Thyroid gland (tissue), 4 donors: ENCODE measurements at regions of chr3 and their contacts with region 1.

Region 1: GRCh38 chr3:194315088-194315964 is 35.8 kb downstream of the CPN2 start:
- DNase-seq: peak; percentile 86 to 87
- H3K4me3 ChIP-seq: peak overlapping the region in 1 of 3 donors; percentile 19
- H3K27ac ChIP-seq: peak overlapping the region; percentile 28 to 66 (median 44)
- H3K4me1 ChIP-seq: peaks cover 21 to 46% of the 10 kb centered on the region in 2 donors
- H3K27me3 ChIP-seq: no peaks in the 10 kb centered on the region
- CTCF ChIP-seq: peak in 5 of 6 experiments; percentile 78 to 96 (median 95)
- POLR2A ChIP-seq: peak in 1 of 2 donors; percentile 53

Region 2: GRCh38 chr3:193662757-193663322 is 652.5 kb before region 1 on chr3:
- intact Hi-C with region 1: loop called (anchors 5 kb)
- DNase-seq: no peak
- H3K4me3 ChIP-seq: no peak overlapping the region
- H3K27ac ChIP-seq: no peak overlapping the region
- H3K4me1 ChIP-seq: no peaks in the 10 kb centered on the region
- H3K27me3 ChIP-seq: no peaks in the 10 kb centered on the region
- CTCF ChIP-seq: no peak
- POLR2A ChIP-seq: no peak

Region 3: GRCh38 chr3:193788189-193788991 is 526.9 kb before region 1 on chr3:
- intact Hi-C with region 1: loop called (anchors 5 kb)
- DNase-seq: peak; percentile 63 to 66
- H3K4me3 ChIP-seq: no peak overlapping the region
- H3K27ac ChIP-seq: no peak overlapping the region
- H3K4me1 ChIP-seq: peaks cover 5 to 19% of the 10 kb centered on the region in 2 donors
- H3K27me3 ChIP-seq: no peaks in the 10 kb centered on the region
- CTCF ChIP-seq: peak; percentile 55 to 83 (median 70)
- POLR2A ChIP-seq: no peak

Region 4: GRCh38 chr3:194134757-194135528 is 180.4 kb before region 1 on chr3:
- intact Hi-C with region 1: loop called (anchors 5 kb)
- DNase-seq: peak; percentile 93 to 94
- H3K4me3 ChIP-seq: peak overlapping the region; percentile 19 to 58 (median 47)
- H3K27ac ChIP-seq: peak overlapping the region; percentile 94 to 97 (median 95)
- H3K4me1 ChIP-seq: peaks cover 29 to 32% of the 10 kb centered on the region in 2 donors
- H3K27me3 ChIP-seq: no peaks in the 10 kb centered on the region
- CTCF ChIP-seq: peak in 1 of 6 experiments; percentile 14
- POLR2A ChIP-seq: peak in 1 of 2 donors; percentile 65

Region 5: GRCh38 chr3:194458131-194458530 is 142.8 kb after region 1 on chr3:
- intact Hi-C with region 1: no loop called
- DNase-seq: no peak
- H3K4me3 ChIP-seq: no peak overlapping the region
- H3K27ac ChIP-seq: no peak overlapping the region
- H3K4me1 ChIP-seq: peaks cover 6 to 7% of the 10 kb centered on the region in 2 donors
- H3K27me3 ChIP-seq: no peaks in the 10 kb centered on the region
- CTCF ChIP-seq: no peak
- POLR2A ChIP-seq: no peak